HCT116 (cell line): ENCODE measurements at regions of chr11 and their contacts with region 1.

Region 1: GRCh38 chr11:62217191-62217748 is 8.8 kb downstream of the SCGB2A1 start:
- DNase-seq: no peak
- ATAC-seq: peak; percentile 63
- H3K4me3 ChIP-seq: no peak overlapping the region
- H3K27ac ChIP-seq: no peak overlapping the region
- H3K4me1 ChIP-seq: no peaks in the 10 kb centered on the region
- H3K27me3 ChIP-seq: no peaks in the 10 kb centered on the region
- CTCF ChIP-seq: peak; percentile 53 to 89 (median 64)
- POLR2A ChIP-seq: no peak
- RAD21 ChIP-seq: peak; percentile 81

Region 2: GRCh38 chr11:62169091-62169847 is 48.0 kb before region 1 on chr11:
- CTCF ChIA-PET with region 1: no interaction called
- POLR2A ChIA-PET with region 1: no interaction called
- RAD21 ChIA-PET with region 1: no interaction called
- intact Hi-C with region 1: no loop called
- DNase-seq: no peak
- ATAC-seq: no peak
- H3K4me3 ChIP-seq: no peak overlapping the region
- H3K27ac ChIP-seq: no peak overlapping the region
- H3K4me1 ChIP-seq: peaks cover 0 to 4% of the 10 kb centered on the region in 2 experiments; a peak in 1 of 4 replicates
- H3K27me3 ChIP-seq: 0 out of 2 replicates have a peak, but pooled peaks cover 3% of the 10 kb centered on the region
- CTCF ChIP-seq: no peak
- POLR2A ChIP-seq: no peak
- RAD21 ChIP-seq: no peak

Region 3: DNA sequence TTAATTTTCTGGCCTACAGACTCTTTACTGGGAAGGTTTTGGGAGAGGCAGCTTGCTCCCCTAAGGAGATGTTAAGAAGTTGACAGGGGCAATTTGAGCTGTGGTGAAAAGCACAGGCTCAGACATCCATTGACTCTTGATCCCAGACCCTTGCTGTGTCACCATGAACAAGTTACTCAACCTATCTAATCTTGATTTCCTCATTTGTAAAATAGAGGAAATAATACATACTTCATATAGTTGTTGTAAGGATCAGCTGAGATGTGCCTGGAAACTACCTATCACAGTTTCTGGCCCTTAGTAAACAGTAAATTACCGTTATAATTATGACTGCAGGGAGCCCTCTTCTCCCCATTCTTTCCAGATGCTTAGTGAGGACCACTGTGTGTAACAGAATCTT is 98.2 kb after region 1 on chr11:
- CTCF ChIA-PET with region 1: interaction called, 9 read pairs
- POLR2A ChIA-PET with region 1: no interaction called
- RAD21 ChIA-PET with region 1: no interaction called
- intact Hi-C with region 1: loop called (anchors 1 kb)
- DNase-seq: no peak
- ATAC-seq: no peak
- H3K4me3 ChIP-seq: no peak overlapping the region
- H3K27ac ChIP-seq: no peak overlapping the region
- H3K4me1 ChIP-seq: no peaks in the 10 kb centered on the region
- H3K27me3 ChIP-seq: peaks cover 4% of the 10 kb centered on the region; the same call in 1 of the 2 replicates
- CTCF ChIP-seq: no peak
- POLR2A ChIP-seq: no peak
- RAD21 ChIP-seq: no peak

Region 4: GRCh38 chr11:62324738-62325556 is 107.7 kb after region 1 on chr11:
- CTCF ChIA-PET with region 1: interaction called, 4 read pairs
- POLR2A ChIA-PET with region 1: no interaction called
- RAD21 ChIA-PET with region 1: no interaction called
- intact Hi-C with region 1: loop called (anchors 1 kb)
- DNase-seq: peak; percentile 34
- ATAC-seq: peak; percentile 100
- H3K4me3 ChIP-seq: no peak overlapping the region
- H3K27ac ChIP-seq: no peak overlapping the region
- H3K4me1 ChIP-seq: no peaks in the 10 kb centered on the region
- H3K27me3 ChIP-seq: no peaks in the 10 kb centered on the region
- CTCF ChIP-seq: peak; percentile 90 to 97 (median 93)
- POLR2A ChIP-seq: no peak
- RAD21 ChIP-seq: peak; percentile 86